Right lobe of liver (tissue), 6 donors: ENCODE measurements at regions of chr10 and their contacts with region 1.

Region 1: GRCh38 chr10:48551861-48552591 is 52.8 kb downstream of the ARHGAP22 start:
- DNase-seq: no peak
- ATAC-seq: peak; percentile 50 to 83 (median 70)
- H3K4me3 ChIP-seq: no peak overlapping the region
- H3K27ac ChIP-seq: no peak overlapping the region
- H3K4me1 ChIP-seq: no peaks in the 10 kb centered on the region
- H3K27me3 ChIP-seq: no peaks in the 10 kb centered on the region
- CTCF ChIP-seq: peak; percentile 58 to 71 (median 62)
- POLR2A ChIP-seq: no peak

Region 2: GRCh38 chr10:48656241-48656913 is 104.4 kb after region 1 on chr10:
- intact Hi-C with region 1: loop called (anchors 10 kb)
- DNase-seq: peak; percentile 93 to 95 (median 94)
- ATAC-seq: peak; percentile 82 to 96 (median 93)
- H3K4me3 ChIP-seq: peak overlapping the region; percentile 38 to 63 (median 42)
- H3K27ac ChIP-seq: peak overlapping the region in 2 of 3 donors; percentile 66 to 82
- H3K4me1 ChIP-seq: peaks cover 0 to 13% (median 3%) of the 10 kb centered on the region in 4 donors
- H3K27me3 ChIP-seq: no peaks in the 10 kb centered on the region
- CTCF ChIP-seq: peak; percentile 84 to 99 (median 98)
- POLR2A ChIP-seq: no peak

Region 3: DNA sequence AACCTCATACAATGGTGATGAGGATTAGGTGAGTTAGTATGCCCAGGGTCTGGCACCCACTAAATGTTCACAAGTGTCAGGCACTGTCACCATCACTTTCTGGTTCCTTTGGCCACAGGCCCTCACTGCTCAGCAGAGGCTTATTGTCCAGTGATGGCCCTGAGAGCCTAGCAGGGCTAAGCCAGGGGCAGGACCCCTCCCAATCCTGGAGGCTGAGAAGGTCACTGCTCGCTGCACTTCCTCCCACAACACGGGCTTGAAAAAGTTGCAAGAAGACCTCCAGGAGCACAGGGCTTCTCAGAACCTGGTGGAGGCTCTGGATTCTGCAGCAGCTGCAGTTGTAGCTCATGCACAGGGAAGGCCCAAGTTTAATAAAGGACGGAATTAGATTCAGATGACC is 795.8 kb after region 1 on chr10:
- intact Hi-C with region 1: no loop called
- DNase-seq: no peak
- ATAC-seq: no peak
- H3K4me3 ChIP-seq: no peak overlapping the region
- H3K27ac ChIP-seq: no peak overlapping the region
- H3K4me1 ChIP-seq: no peaks in the 10 kb centered on the region
- H3K27me3 ChIP-seq: no peaks in the 10 kb centered on the region
- CTCF ChIP-seq: no peak
- POLR2A ChIP-seq: no peak